Lower leg skin (tissue), 4 donors: ENCODE measurements at regions of chr1 and their contacts with region 1.

Region 1: GRCh38 chr1:168603501-168604110 is 27.2 kb downstream of the XCL1 start:
- DNase-seq: peak; percentile 62 to 90
- H3K4me3 ChIP-seq: no peak overlapping the region
- CTCF ChIP-seq: peak in 1 of 3 donors; percentile 22
- POLR2A ChIP-seq: no peak

Region 2: DNA sequence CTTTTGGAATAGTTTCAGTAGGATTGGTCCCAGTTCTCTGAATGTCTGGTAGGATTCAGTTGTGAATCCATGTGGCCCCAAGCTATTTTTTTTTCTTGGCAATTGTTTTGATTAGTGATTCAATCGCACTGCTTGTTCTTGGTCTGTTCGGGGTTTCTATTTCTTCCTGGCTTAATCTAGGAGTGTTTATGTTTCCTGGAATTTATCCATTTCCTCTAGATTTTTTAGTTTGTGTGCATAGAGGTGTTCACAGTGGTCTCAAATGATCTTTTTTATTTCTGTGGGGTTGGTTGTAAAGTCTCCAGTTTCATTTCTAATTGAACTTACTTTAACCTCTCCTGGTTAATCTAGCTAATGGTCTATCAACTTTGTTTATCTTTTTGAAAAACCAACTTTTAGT is 646.4 kb after region 1 on chr1:
- intact Hi-C with region 1: no loop called
- DNase-seq: no peak
- H3K4me3 ChIP-seq: no peak overlapping the region
- CTCF ChIP-seq: no peak
- POLR2A ChIP-seq: no peak

Region 3: DNA sequence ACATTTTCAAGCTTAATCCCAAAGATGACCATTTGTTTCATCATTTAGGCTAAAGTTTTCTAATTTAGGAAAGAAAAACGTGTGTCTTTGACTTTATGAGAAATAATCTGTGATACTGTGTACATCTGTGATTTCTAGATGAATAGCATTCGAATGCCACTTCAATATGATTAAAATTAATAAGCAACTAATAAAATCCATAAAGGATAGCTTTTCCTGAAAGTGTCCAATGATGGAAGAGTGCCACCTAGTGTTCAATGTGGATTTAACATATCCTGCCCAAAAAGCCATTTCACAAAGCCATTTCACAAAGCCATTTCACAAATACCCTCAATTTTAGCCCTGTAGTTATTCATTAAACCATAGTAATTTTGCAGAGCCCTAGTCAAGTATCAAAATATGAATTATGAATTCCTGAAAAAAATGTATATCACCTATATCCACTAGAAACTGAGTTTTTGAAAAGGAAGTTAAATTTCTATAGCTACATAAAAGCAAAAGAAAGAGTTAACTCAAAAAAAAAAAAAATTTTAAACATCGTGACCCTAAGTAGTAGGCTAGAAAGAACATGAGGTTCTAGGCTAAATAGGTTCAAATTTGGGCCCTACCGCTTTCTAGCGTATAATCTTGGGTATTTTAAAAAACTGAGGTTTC is 744.9 kb after region 1 on chr1:
- intact Hi-C with region 1: loop called (anchors 10 kb)
- DNase-seq: no peak
- H3K4me3 ChIP-seq: no peak overlapping the region
- CTCF ChIP-seq: peak in 1 of 3 donors; percentile 39
- POLR2A ChIP-seq: no peak

Region 4: DNA sequence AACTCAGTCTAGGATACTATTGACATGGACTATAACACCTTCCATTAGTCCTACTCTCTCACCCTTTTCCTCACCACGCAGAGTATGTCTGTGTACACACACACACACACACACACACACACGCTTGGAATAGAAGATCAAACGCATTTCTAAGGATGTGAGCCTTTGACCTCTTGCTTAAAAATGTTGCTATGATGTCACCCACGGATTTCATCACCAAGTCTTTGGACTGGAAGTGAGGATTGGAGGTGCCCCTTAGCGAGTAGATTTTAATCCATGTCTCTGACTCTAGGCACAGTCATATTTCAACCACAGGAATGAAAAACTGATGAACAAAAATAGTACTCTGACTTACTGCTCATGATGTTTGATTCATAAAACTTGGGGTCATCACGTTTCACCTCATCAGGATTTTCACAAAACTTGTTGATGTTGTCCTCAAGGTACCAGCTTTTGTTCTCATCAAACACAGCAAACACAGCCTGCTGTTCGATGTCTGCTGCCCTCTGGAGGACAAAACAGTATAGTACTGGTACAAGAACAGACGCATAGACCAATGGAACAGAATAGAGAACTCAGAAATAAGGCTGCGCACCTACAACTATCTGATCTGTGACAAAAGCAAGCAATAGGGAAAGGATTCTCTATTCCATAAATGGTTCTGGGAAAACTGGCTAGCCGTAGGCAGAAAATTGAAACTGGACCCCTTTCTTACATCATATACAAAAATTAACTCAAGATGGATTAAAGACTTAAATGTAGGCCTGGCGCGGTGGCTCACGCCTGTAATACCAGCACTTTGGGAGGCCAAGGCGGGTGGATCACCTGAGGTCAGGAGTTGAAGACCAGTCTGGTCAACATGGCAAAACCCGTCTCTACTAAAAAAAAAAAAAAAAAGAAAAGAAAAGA is 942.7 kb after region 1 on chr1:
- intact Hi-C with region 1: loop called (anchors 10 kb)
- DNase-seq: peak in 1 of 2 donors; percentile 76
- H3K4me3 ChIP-seq: no peak overlapping the region
- CTCF ChIP-seq: peak in 1 of 3 donors; percentile 37
- POLR2A ChIP-seq: no peak